ENCODE measurements at regions of chr10 and their contacts with region 1.

Region 1: GRCh38 chr10:7525314-7526016 is 114.6 kb upstream of the SFMBT2 start:
- DNase-seq: peak; percentile 42 to 49
- H3K4me3 ChIP-seq: no peak overlapping the region
- H3K27ac ChIP-seq: no peak overlapping the region
- H3K4me1 ChIP-seq: no peaks in the 10 kb centered on the region
- H3K27me3 ChIP-seq: peaks cover 16% of the 10 kb centered on the region
- CTCF ChIP-seq: peak; percentile 78

Region 2: DNA sequence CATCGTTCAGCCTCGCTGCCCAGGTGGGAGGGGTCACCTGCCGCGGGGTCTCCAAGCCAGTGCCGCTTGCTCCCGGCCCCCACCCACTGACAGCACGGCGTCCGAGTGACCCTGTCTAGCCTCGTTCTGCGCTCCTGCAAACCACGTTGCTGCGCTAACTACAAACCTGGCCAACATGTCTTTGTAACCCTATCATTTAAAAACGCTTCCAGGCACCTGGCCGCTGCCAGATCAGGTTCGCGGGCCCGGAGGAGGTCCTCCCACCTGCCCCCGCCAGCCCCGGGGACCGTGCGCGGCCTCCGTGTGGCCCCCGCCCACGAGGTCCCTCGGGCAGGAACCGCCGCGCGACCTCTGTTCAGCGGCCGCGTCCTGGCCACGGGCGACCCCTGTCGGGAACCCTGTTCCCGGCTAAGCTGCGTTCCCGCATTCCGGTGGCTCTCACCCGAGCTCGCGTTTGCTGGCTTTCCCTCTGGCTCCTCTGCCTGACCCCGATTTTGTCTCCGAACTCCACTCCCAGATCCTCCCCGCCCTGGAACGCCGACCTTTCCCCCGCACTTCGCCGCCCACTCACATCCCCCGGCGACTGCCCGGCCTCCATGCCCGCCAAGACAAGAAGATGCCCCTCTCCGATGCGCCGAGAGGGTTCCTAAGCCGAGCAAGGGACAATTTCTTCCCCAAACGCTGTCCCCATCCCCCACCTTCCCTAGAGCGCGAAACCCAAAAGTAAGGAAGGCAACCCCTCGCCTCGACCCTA is 117.0 kb before region 1 on chr10:
- CTCF ChIA-PET with region 1: no interaction called
- POLR2A ChIA-PET with region 1: no interaction called
- intact Hi-C with region 1: no loop called
- DNase-seq: no peak
- H3K4me3 ChIP-seq: no peak overlapping the region
- H3K27ac ChIP-seq: no peak overlapping the region
- H3K4me1 ChIP-seq: no peaks in the 10 kb centered on the region
- H3K27me3 ChIP-seq: no peaks in the 10 kb centered on the region
- CTCF ChIP-seq: no peak

Region 3: GRCh38 chr10:7618461-7618860 is 93.0 kb after region 1 on chr10:
- CTCF ChIA-PET with region 1: no interaction called
- POLR2A ChIA-PET with region 1: no interaction called
- intact Hi-C with region 1: no loop called
- DNase-seq: no peak
- H3K4me3 ChIP-seq: no peak overlapping the region
- H3K27ac ChIP-seq: no peak overlapping the region
- H3K4me1 ChIP-seq: no peaks in the 10 kb centered on the region
- H3K27me3 ChIP-seq: peaks cover 39% of the 10 kb centered on the region
- CTCF ChIP-seq: no peak

Region 4: GRCh38 chr10:7679256-7679655 is 153.8 kb after region 1 on chr10:
- CTCF ChIA-PET with region 1: interaction called, 10 read pairs
- POLR2A ChIA-PET with region 1: no interaction called
- intact Hi-C with region 1: no loop called
- DNase-seq: no peak
- H3K4me3 ChIP-seq: no peak overlapping the region
- H3K27ac ChIP-seq: no peak overlapping the region
- H3K4me1 ChIP-seq: no peaks in the 10 kb centered on the region
- H3K27me3 ChIP-seq: peaks cover 11% of the 10 kb centered on the region; the same call in 1 of the 2 replicates
- CTCF ChIP-seq: no peak

Region 5: DNA sequence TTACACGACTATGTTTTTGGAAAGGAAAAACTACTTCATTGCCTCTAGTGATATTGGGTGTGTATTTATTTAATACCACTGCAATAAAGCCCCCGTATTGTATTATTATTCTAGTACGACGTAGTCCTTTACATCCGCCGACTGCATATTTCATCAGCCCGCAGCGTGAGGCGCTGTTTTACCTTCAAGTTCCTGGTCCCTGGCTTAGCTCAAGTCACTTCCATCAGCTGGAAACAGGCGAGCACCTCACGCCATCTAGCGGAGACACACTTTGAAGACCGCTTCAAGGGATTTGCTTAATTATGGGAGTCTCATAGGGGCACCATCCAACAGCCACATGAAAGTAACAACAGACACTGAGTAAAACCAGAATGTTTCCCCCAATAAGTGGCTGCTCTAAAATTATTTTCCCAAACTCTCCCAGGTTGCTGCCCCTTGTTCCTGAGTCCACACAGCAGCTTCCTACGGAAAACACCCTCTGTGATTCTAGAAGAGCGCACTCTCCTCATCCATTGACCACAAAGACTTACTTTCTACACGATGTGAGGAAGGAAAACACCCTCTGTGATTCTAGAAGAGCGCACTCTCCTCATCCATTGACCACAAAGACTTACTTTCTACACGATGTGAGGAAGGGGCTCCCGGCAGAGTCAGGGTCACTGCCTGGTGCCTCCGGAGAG is 161.9 kb after region 1 on chr10:
- CTCF ChIA-PET with region 1: interaction called, 18 read pairs
- POLR2A ChIA-PET with region 1: no interaction called
- intact Hi-C with region 1: loop called (anchors 1 kb)
- DNase-seq: peak; percentile 55 to 63
- H3K4me3 ChIP-seq: no peak overlapping the region
- H3K27ac ChIP-seq: no peak overlapping the region
- H3K4me1 ChIP-seq: no peaks in the 10 kb centered on the region
- H3K27me3 ChIP-seq: peaks cover 4% of the 10 kb centered on the region; the same call in 1 of the 2 replicates
- CTCF ChIP-seq: peak; percentile 71

Measured in PC-9 (cell line).